CD14-positive monocyte (primary cell): ENCODE measurements at regions of chr9 and their contacts with region 1.

Region 1: GRCh38 chr9:99085949-99086948 is 18.7 kb upstream of the TGFBR1 start:
- DNase-seq: peak; percentile 83 to 92 (median 86)
- H3K4me3 ChIP-seq: peak overlapping the region in 1 of 3 experiments; percentile 44
- H3K4me3 Mint-ChIP-seq: peak overlapping the region in 1 of 2 donors; percentile 69
- H3K27ac ChIP-seq: peak overlapping the region in 1 of 2 donors; percentile 59
- H3K27ac Mint-ChIP-seq: peak overlapping the region; percentile 42 to 91 (median 80)
- H3K4me1 ChIP-seq: peaks cover 17 to 18% of the 10 kb centered on the region in 2 donors
- H3K4me1 Mint-ChIP-seq: peaks cover 26% of the 10 kb centered on the region
- H3K27me3 ChIP-seq: no peaks in the 10 kb centered on the region
- H3K27me3 Mint-ChIP-seq: peaks cover 0 to 8% (median 3%) of the 10 kb centered on the region in 3 donors
- CTCF ChIP-seq: no peak

Region 2: DNA sequence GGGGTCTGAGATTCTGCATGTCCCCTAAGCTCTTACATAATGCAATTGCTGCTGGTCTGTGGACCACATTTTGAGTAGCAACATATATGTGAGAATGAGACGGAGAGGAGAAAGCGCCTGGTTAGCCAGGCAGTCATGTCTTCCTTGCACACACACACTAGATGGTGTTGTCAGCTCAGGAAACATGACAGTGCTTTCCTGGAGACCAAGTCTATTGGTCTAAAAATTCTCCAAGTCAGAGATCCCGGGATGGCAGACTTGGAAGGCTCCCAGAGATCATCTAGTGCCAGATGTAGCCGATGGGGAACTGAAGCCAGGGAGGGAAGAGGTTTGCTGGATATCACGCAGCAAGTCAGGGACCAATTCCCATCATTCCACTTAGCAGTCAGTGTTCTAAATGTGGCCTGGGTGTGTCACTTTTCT is 225.4 kb before region 1 on chr9:
- intact Hi-C with region 1: no loop called
- DNase-seq: no peak
- H3K4me3 ChIP-seq: no peak overlapping the region
- H3K4me3 Mint-ChIP-seq: no peak overlapping the region
- H3K27ac ChIP-seq: no peak overlapping the region
- H3K27ac Mint-ChIP-seq: no peak overlapping the region
- H3K4me1 ChIP-seq: peaks cover 15 to 17% of the 10 kb centered on the region in 2 donors
- H3K4me1 Mint-ChIP-seq: peaks cover 38% of the 10 kb centered on the region
- H3K27me3 ChIP-seq: no peaks in the 10 kb centered on the region
- H3K27me3 Mint-ChIP-seq: peaks cover 0 to 3% (median 2%) of the 10 kb centered on the region in 3 donors
- CTCF ChIP-seq: no peak

Region 3: GRCh38 chr9:99050292-99050911 is 35.8 kb before region 1 on chr9:
- intact Hi-C with region 1: loop called in 1 of 2 experiments (anchors 5 kb)
- DNase-seq: no peak
- H3K4me3 ChIP-seq: no peak overlapping the region
- H3K4me3 Mint-ChIP-seq: peak overlapping the region in 1 of 2 donors; percentile 28
- H3K27ac ChIP-seq: no peak overlapping the region
- H3K27ac Mint-ChIP-seq: peak overlapping the region in 1 of 7 donors; percentile 27
- H3K4me1 ChIP-seq: peaks cover 10 to 13% of the 10 kb centered on the region in 2 donors
- H3K4me1 Mint-ChIP-seq: peaks cover 21% of the 10 kb centered on the region
- H3K27me3 ChIP-seq: peaks cover 63 to 70% of the 10 kb centered on the region in 2 donors
- H3K27me3 Mint-ChIP-seq: peaks cover 73 to 86% (median 81%) of the 10 kb centered on the region in 3 donors
- CTCF ChIP-seq: no peak

Region 4: GRCh38 chr9:99130069-99130468 is 43.8 kb after region 1 on chr9:
- intact Hi-C with region 1: loop called in 1 of 2 experiments (anchors 10 kb)
- DNase-seq: peak in 2 of 3 donors; percentile 29 to 51
- H3K4me3 ChIP-seq: no peak overlapping the region
- H3K4me3 Mint-ChIP-seq: no peak overlapping the region
- H3K27ac ChIP-seq: no peak overlapping the region
- H3K27ac Mint-ChIP-seq: peak overlapping the region in 3 of 7 donors; percentile 3 to 69 (median 24)
- H3K4me1 ChIP-seq: peaks cover 3 to 4% of the 10 kb centered on the region in 2 donors
- H3K4me1 Mint-ChIP-seq: peaks cover 35% of the 10 kb centered on the region
- H3K27me3 ChIP-seq: no peaks in the 10 kb centered on the region
- H3K27me3 Mint-ChIP-seq: no peaks in the 10 kb centered on the region
- CTCF ChIP-seq: no peak